ENCODE measurements at regions of chr1 and their contacts with region 1.

Region 1: GRCh38 chr1:94417978-94418663 is at the start of gene ABCD3:
- DNase-seq: peak; percentile 94
- H3K4me3 Mint-ChIP-seq: no peak within 1 kb of the TSS
- H3K27ac Mint-ChIP-seq: peak within 1 kb of the TSS; percentile 43
- H3K4me1 Mint-ChIP-seq: peaks cover 35% of the 10 kb centered on the region
- H3K27me3 Mint-ChIP-seq: no peaks in the 10 kb centered on the region
- total RNA-seq, gene ABCD3: 29.2 to 30.8 TPM

Region 2: GRCh38 chr1:93447516-93448291 is 970.4 kb before region 1 on chr1 and contains the start of gene FNBP1L:
- CTCF ChIA-PET with region 1: no interaction called
- intact Hi-C with region 1: loop called (anchors 10 kb)
- DNase-seq: peak; percentile 59
- H3K4me3 Mint-ChIP-seq: peak within 1 kb of the TSS; percentile 83
- H3K27ac Mint-ChIP-seq: no peak within 1 kb of the TSS
- H3K4me1 Mint-ChIP-seq: peaks cover 10% of the 10 kb centered on the region
- H3K27me3 Mint-ChIP-seq: peaks cover 43% of the 10 kb centered on the region
- total RNA-seq, gene FNBP1L: 0.17 to 0.21 TPM

Region 3: GRCh38 chr1:93909146-93910050 is 508.7 kb before region 1 on chr1 and contains the start of gene GCLM:
- CTCF ChIA-PET with region 1: no interaction called
- intact Hi-C with region 1: loop called (anchors 1 kb)
- DNase-seq: peak; percentile 88
- H3K4me3 Mint-ChIP-seq: peak within 1 kb of the TSS; percentile 82
- H3K27ac Mint-ChIP-seq: peak within 1 kb of the TSS; percentile 87
- H3K4me1 Mint-ChIP-seq: peaks cover 27% of the 10 kb centered on the region
- H3K27me3 Mint-ChIP-seq: no peaks in the 10 kb centered on the region
- total RNA-seq, gene GCLM: 19.5 to 22.7 TPM

Region 4: GRCh38 chr1:94237291-94238226 is 180.6 kb before region 1 on chr1 and contains the start of gene ARHGAP29:
- CTCF ChIA-PET with region 1: no interaction called
- intact Hi-C with region 1: loop called (anchors 2 kb)
- DNase-seq: peak; percentile 67
- H3K4me3 Mint-ChIP-seq: peak within 1 kb of the TSS; percentile 68
- H3K27ac Mint-ChIP-seq: no peak within 1 kb of the TSS
- H3K4me1 Mint-ChIP-seq: peaks cover 7% of the 10 kb centered on the region
- H3K27me3 Mint-ChIP-seq: peaks cover 64% of the 10 kb centered on the region
- total RNA-seq, gene ARHGAP29: 0.37 to 0.48 TPM

Region 5: DNA sequence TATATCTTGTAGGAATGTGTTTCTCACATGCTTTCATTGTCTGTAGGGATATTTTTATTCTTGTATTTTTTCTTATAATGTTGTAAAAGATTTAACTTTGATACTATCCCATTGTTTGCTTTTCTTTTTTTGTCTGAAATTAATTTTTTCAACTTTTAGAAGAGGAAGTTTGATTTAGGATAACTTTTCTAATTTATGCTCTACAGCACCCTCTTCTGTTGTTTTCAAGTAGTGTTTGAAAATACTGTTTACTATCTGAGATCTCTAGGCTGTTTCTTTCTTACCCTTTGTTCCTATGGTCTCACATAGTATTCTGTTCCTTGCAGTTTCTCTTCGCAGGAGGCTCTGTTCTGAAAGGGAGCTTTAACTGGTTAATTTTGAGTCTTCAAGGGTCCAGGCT is 22.0 kb after region 1 on chr1:
- CTCF ChIA-PET with region 1: no interaction called
- intact Hi-C with region 1: loop called (anchors 2 kb)
- DNase-seq: no peak
- H3K4me3 Mint-ChIP-seq: no peak overlapping the region
- H3K27ac Mint-ChIP-seq: no peak overlapping the region
- H3K4me1 Mint-ChIP-seq: peaks cover 21% of the 10 kb centered on the region
- H3K27me3 Mint-ChIP-seq: no peaks in the 10 kb centered on the region

Region 6: GRCh38 chr1:94541175-94542087 is 123.3 kb after region 1 on chr1 and contains the start of gene F3:
- CTCF ChIA-PET with region 1: no interaction called
- intact Hi-C with region 1: loop called (anchors 2 kb)
- DNase-seq: peak; percentile 89
- H3K4me3 Mint-ChIP-seq: peak within 1 kb of the TSS; percentile 72
- H3K27ac Mint-ChIP-seq: no peak within 1 kb of the TSS
- H3K4me1 Mint-ChIP-seq: peaks cover 14% of the 10 kb centered on the region
- H3K27me3 Mint-ChIP-seq: peaks cover 63% of the 10 kb centered on the region
- total RNA-seq, gene F3: 0.10 TPM in 1 of 2 experiments, not detected in the other

Region 7: DNA sequence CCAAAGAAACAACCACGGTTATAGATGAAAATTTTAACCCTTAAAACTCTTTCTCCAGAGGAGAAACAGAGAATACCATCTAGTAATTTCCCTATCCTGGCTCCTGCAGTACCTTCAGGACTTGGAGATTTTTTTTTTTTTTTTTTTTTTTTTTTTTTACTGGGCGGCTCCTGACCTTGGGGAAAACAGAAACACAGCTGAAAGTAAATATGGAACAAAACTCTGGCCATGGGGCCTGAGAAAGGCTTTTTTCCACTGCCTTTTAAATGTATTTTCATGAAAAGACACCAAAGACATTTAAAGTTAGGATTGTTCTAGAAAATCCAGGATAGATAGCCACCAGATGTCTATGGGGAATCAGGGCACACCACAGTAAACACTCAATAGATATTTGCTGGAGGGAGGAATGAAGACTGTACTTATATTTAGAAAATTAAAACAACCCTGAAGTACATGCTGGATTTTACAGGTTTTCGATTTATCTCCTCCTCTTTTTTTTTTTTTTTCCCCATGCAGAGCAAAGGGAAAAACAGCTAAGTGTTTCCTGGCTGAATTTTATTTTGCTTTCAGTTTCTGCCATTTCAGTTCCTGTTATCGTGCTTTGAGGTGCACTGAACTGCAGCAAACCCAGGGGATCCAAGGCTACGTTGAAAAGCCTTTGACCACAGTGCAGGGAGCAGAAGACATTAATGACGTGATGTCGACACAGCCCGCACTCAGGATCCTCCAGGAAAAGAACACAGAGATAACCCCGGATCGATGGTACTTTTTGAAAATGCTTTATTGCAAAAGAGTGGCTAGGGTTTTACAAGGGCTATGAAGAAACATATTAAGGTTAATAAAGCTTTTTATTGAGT is 544.5 kb after region 1 on chr1:
- CTCF ChIA-PET with region 1: no interaction called
- intact Hi-C with region 1: loop called (anchors 5 kb)
- DNase-seq: peak; percentile 48
- H3K4me3 Mint-ChIP-seq: peak overlapping the region; percentile 84
- H3K27ac Mint-ChIP-seq: peak overlapping the region; percentile 84
- H3K4me1 Mint-ChIP-seq: peaks cover 8% of the 10 kb centered on the region
- H3K27me3 Mint-ChIP-seq: no peaks in the 10 kb centered on the region